Activated CD8-positive, alpha-beta T cell treated with anti-CD3 and anti-CD28 coated beads for 36 hours (primary cell): ENCODE measurements at regions of chr2 and their contacts with region 1.

Region 1: GRCh38 chr2:227479865-227480475 is 8.0 kb downstream of the AGFG1 start:
- DNase-seq: no peak
- ATAC-seq: peak; percentile 43
- H3K4me3 Mint-ChIP-seq: peak overlapping the region; percentile 28
- H3K27ac Mint-ChIP-seq: peak overlapping the region; percentile 78
- H3K4me1 Mint-ChIP-seq: peaks cover 75% of the 10 kb centered on the region
- H3K27me3 Mint-ChIP-seq: no peaks in the 10 kb centered on the region
- CTCF ChIP-seq: peak; percentile 65

Region 2: DNA sequence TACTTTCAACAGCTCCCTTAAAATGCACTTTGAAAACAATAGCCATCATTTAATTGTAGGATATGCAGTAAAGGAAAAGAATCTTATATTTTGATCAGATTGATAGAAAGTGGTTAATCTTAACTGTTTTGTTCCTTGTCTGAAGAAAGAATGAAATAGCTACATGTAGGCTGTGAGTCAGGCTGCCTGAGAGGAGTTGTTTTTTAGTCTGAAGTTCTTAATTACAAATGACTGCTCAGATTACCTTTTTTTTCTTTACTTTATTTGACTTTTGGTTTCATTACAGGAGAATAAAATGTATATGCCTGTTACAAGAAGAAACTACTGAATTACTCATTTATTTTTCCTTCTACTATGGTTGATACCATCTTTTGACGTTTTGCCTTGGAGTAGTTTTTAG is 48.8 kb after region 1 on chr2:
- CTCF ChIA-PET with region 1: interaction called, 3 read pairs
- POLR2A ChIA-PET with region 1: no interaction called
- intact Hi-C with region 1: loop called (anchors 5 kb)
- DNase-seq: no peak
- ATAC-seq: no peak
- H3K4me3 Mint-ChIP-seq: no peak overlapping the region
- H3K27ac Mint-ChIP-seq: peak overlapping the region; percentile 62
- H3K4me1 Mint-ChIP-seq: peaks cover 13% of the 10 kb centered on the region
- H3K27me3 Mint-ChIP-seq: no peaks in the 10 kb centered on the region
- CTCF ChIP-seq: no peak